Dendritic cell treated with granulocyte-macrophage colony-stimulating factor and Interleukin-4, amounts not matched to agents 40 ng/mL and 50 ng/mL, for 4 days (primary cell): ENCODE measurements at regions of chr11 and their contacts with region 1.

Region 1: DNA sequence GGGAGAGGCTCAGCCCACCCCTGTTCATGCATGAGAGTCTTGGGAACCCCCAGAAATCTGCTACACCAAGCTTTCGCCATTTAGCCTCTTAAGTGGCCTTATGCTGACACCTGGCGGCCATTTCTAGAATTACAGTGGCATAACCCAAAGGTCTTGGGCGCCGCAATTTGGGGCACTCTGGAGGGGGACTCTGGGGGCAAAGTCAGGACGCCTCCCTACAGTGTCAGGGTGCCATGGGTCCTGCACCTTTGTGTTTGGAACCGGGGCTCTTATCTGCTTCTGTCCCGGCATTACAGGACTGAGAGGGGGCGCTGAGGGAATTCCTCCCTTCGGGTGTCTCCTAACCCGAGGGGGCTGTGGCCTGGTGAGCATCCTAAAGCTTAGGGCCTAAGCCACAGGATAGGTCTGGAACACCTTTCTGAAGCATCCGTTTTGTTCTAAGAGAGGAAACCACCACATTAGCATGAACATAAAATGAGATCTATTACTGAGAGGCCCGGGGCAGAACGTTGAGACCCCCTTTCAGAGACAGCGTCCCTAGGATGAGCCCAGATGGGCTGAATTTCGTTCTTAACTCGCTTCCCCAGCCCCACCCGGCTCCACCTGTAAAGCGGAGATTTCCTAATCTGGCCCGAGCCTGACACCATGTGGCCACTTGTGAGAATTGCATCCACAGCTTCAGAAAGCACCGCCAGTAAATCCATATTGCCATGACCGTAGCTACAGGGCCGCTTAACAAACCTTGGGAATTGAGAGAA is 9.3 kb downstream of the INS start:
- H3K4me3 Mint-ChIP-seq: no peak overlapping the region
- H3K27ac Mint-ChIP-seq: no peak overlapping the region
- H3K4me1 Mint-ChIP-seq: peaks cover 21% of the 10 kb centered on the region
- H3K27me3 Mint-ChIP-seq: peaks cover 76% of the 10 kb centered on the region

Region 2: DNA sequence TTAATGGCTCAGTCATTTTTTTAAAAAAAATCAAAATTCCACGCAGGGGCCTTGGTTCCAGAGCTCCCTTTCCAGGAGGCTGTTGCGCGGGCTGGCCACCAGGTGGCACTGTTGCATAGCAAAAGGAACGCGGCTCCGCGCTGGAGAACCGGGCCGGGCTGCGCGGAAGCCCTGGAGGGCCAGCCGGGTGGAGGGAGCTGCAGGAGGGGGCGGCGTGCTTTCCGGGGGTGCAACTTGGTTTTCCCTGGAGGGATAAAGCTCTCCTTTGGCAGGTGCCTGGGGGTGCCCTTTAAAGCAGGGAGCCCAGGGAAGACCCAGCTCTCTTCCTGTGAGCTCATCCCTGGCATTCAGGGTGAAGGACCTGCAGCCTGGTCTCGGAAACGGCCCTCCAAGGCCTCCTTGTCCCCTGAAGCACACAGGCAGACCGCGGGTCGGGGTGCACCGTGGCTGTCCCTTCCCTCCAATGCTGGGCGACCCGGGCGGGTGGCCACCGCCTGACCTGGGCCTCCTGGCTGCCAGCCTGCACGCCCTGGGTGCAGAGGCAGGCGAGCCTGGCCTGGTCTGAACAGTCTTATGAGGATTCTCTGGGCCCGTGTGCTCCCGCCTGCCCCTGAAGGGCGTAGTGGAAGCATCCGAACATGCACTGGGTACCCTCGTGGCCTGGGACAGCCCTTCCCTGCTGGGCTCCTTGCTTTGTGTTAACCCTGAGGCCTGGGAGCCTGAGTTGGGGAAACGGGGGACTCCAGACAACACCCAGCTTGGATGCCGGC is 498.7 kb before region 1 on chr11:
- intact Hi-C with region 1: loop called (anchors 10 kb)
- H3K4me3 Mint-ChIP-seq: no peak overlapping the region
- H3K27ac Mint-ChIP-seq: no peak overlapping the region
- H3K4me1 Mint-ChIP-seq: no peaks in the 10 kb centered on the region
- H3K27me3 Mint-ChIP-seq: peaks cover 55% of the 10 kb centered on the region

Region 3: DNA sequence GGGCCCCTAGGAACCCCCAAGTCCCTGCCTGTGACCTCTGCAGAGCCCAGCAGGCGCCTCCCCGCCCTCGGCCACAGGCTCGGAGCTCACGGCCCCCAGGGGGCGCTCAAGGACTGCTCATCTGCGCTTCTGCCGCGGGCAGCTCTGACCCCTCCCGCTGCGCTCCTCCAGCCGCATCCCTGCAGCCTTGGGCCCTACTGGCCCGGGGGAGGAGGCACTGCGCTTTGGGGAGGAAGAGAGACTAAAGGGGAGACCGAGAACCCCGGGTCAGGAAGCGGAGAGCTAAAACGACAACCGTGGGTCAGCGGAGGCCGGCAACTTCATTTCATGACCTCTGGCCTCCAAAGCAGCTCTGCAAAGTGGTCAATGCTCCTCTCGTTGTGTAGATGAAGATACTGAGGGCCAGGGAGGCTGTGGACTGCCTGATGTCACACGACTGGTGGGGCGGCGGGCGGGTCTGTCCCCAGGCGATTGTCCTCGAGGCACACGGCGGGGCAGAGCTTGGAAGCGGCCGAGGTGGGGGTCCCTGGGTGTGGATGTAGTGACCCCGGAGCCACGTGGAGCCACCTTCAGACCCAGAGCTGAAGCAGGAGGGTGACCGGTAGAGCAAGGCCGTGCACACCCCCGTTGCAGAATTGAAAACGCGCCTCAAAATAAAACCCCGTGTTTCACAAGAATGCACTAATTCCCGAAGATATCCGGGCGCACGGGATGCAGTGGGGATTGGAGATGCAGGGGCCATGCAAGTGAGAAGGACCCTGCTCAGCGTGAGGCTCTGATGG is 457.4 kb before region 1 on chr11:
- intact Hi-C with region 1: loop called (anchors 2 kb)
- H3K4me3 Mint-ChIP-seq: no peak overlapping the region
- H3K27ac Mint-ChIP-seq: no peak overlapping the region
- H3K4me1 Mint-ChIP-seq: peaks cover 11% of the 10 kb centered on the region
- H3K27me3 Mint-ChIP-seq: peaks cover 83% of the 10 kb centered on the region

Region 4: DNA sequence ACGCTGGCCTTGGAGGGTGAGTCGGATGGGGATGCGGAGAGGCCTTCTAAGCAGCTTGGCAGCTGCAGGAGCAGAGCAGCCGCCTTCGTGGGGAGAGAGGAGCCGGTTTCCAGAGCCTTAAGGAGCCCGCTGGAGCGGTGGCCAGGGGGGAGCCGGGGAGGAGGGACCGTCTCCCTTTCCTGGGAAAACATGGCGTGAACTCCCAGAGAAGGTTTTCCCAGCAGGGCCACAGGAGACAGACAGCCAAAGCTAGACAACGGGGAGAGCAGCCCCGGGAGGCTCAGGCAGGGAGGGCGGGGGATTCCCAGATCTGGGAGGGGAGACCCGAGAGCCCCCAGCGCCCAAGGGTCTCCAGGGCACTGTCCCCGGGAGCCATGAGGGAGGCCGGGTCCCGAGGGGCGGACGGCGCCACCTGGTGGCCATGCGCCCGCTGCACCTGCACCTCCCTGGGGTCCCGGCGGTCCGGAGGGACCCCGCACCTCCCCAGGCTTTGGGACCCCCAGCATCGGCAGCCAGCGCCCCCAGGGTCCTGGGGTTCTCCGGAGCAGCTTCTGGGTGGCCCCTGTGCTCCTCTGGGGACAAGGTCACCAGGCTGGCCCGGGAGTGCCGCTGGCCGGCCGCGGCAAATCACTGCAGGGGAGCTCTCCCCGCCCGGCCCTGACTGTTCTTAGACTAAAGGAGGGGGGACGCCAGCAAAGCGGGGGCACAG is 319.3 kb before region 1 on chr11:
- intact Hi-C with region 1: loop called (anchors 2 kb)
- H3K4me3 Mint-ChIP-seq: peak overlapping the region; percentile 30
- H3K27ac Mint-ChIP-seq: no peak overlapping the region
- H3K4me1 Mint-ChIP-seq: peaks cover 24% of the 10 kb centered on the region
- H3K27me3 Mint-ChIP-seq: peaks cover 81% of the 10 kb centered on the region

Region 5: GRCh38 chr11:2807025-2807681 is 655.5 kb after region 1 on chr11:
- intact Hi-C with region 1: no loop called
- H3K4me3 Mint-ChIP-seq: no peak overlapping the region
- H3K27ac Mint-ChIP-seq: no peak overlapping the region
- H3K4me1 Mint-ChIP-seq: peaks cover 26% of the 10 kb centered on the region
- H3K27me3 Mint-ChIP-seq: no peaks in the 10 kb centered on the region